Ovary (tissue), 10 donors: ENCODE measurements at regions of chr1 and their contacts with region 1.

Region 1: GRCh38 chr1:209094384-209094783 is 489.1 kb upstream of the CAMK1G start:
- DNase-seq: no peak
- H3K4me3 ChIP-seq: no peak overlapping the region
- H3K27ac ChIP-seq: no peak overlapping the region
- H3K4me1 ChIP-seq: no peaks in the 10 kb centered on the region
- H3K27me3 ChIP-seq: no peaks in the 10 kb centered on the region
- CTCF ChIP-seq: no peak
- EP300 ChIP-seq: no peak
- POLR2A ChIP-seq: no peak

Region 2: DNA sequence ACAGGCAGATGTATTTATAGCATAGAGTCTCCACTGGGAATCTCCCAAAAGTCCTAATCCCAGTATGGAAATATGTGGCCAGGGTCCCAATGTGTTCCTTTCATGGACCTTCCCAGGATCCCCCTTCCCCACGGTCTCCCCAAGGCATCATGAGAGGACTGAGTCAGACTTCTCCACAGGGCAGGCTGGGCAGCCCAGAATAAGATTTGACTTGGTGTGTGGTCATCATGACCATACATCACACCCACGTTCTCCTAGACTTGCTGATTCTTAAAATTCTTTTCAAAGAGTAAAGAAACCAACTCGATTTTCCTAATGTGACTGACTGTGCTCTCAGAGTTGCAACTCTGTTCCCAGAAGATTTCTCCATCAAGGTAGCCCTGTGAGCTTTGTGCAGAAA is 1089.5 kb before region 1 on chr1:
- intact Hi-C with region 1: loop called in 1 of 4 experiments (anchors 5 kb)
- DNase-seq: no peak
- H3K4me3 ChIP-seq: no peak overlapping the region
- H3K27ac ChIP-seq: no peak overlapping the region
- H3K4me1 ChIP-seq: no peaks in the 10 kb centered on the region
- H3K27me3 ChIP-seq: no peaks in the 10 kb centered on the region
- CTCF ChIP-seq: no peak
- EP300 ChIP-seq: no peak
- POLR2A ChIP-seq: no peak

Region 3: DNA sequence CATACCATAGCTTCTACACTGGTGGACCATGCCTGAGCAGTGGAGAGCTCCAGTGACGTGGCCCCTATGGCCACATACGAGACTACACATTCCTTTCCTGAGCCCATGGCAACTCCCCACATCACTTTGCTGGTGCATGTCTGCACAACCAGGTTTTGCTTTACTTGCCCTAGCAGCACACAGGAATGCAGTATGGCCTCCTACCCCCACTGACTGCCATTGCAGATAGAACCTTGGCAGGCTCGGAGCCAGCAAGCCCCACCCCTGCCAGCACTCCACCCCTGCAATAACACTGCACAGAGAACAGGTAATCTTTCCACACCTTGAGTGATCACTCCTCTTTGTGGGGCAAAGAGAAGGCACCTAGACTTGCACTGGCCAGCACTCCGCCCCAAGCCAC is 42.8 kb before region 1 on chr1:
- intact Hi-C with region 1: no loop called
- DNase-seq: no peak
- H3K4me3 ChIP-seq: no peak overlapping the region
- H3K27ac ChIP-seq: no peak overlapping the region
- H3K4me1 ChIP-seq: no peaks in the 10 kb centered on the region
- H3K27me3 ChIP-seq: no peaks in the 10 kb centered on the region
- CTCF ChIP-seq: no peak
- EP300 ChIP-seq: no peak
- POLR2A ChIP-seq: no peak